Activated T-helper 1 cell treated with anti-CD3 and anti-CD28 coated beads, Interleukin-12 subunit alpha, Interleukin-12 subunit beta, Interleukin-2, Interleukin-4 antibody, amounts not matched to agents 30 ng/mL and 10 ng/mL and 1 ng/mL, durations not matched to agents 14 hours and 24 hours and 36 hours (primary cell): ENCODE measurements at regions of chr9 and their contacts with region 1.

Region 1: DNA sequence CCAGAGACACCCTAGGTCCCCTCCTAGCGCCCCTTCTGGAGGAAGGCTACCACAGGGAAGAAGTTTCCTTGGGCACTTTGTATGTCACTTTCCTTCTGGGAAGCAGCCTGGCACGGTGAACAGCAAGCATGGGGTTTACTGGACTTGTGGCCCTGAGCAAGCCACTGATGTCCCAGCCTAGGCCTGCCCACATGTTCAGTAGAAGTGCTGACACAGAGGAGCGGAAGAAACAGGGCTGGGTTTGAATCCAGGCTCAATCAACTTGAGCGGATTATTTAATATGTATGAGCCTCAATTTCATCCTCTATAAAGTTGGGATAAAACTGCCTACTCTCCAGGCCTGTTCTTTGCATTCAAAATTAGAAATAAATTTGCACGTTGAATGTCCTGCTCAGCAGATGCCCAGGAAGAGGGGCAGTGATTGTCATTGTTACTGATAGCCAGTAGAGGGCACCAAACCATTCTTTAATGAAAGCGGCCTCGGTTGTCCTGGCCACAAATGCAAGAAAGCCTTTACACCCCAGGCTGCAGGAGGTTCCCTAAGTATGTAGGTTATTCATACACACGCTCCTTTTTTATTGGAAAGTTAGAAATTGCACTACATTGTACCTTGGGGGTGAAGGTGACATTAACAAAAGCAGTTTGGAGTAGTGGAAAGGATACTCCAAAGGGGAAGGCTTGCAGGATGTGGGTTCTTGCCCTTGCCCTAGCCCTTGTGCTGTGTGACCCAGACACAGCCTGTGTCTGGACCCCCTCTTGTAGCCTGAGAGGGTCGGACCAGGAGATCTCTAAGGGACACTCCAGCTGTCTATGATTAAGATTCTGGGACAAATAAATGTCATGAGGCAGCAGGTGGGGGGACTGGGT is 13.4 kb upstream of the XPA start:
- DNase-seq: peak; percentile 31
- H3K4me3 Mint-ChIP-seq: no peak overlapping the region
- H3K27ac Mint-ChIP-seq: no peak overlapping the region
- H3K4me1 Mint-ChIP-seq: peaks cover 29% of the 10 kb centered on the region
- H3K27me3 Mint-ChIP-seq: peaks cover 15% of the 10 kb centered on the region

Region 2: GRCh38 chr9:97543565-97543964 is 167.0 kb before region 1 on chr9:
- intact Hi-C with region 1: no loop called
- DNase-seq: no peak
- H3K4me3 Mint-ChIP-seq: no peak overlapping the region
- H3K27ac Mint-ChIP-seq: no peak overlapping the region
- H3K4me1 Mint-ChIP-seq: no peaks in the 10 kb centered on the region
- H3K27me3 Mint-ChIP-seq: peaks cover 19% of the 10 kb centered on the region

Region 3: GRCh38 chr9:97853844-97854695 is 143.5 kb after region 1 on chr9:
- intact Hi-C with region 1: loop called (anchors 2 kb)
- DNase-seq: peak; percentile 48
- H3K4me3 Mint-ChIP-seq: peak overlapping the region; percentile 74
- H3K27ac Mint-ChIP-seq: peak overlapping the region; percentile 42
- H3K4me1 Mint-ChIP-seq: peaks cover 18% of the 10 kb centered on the region
- H3K27me3 Mint-ChIP-seq: peaks cover 80% of the 10 kb centered on the region

Region 4: DNA sequence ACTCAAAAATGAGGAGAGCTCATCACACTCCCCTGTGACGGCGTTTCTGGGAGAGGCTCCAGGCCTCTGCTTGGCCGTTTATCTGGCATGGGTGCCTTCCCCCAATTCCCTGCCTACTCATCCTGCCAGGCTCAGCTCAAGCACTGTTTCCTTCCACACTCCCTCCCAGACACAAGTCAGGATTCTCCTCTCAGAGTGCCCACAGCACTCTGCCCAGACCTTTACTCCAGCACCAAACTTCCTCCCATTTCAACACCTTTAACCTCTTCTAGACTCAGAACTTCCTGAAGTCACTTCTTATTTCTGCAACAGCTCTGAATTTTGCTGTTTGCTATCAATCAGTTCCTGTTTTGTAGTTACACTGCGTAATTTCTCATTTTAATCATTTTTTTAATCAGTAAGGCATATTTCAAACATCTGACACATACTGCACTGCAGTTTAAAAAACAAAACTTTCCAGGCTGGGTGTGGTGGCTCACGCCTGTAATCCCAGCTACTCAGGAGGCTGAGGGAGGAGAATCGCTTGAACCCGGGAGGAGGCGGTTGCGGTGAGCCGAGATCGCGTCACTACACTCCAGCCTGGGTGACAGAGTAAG is 195.7 kb after region 1 on chr9:
- intact Hi-C with region 1: loop called (anchors 1 kb)
- DNase-seq: no peak
- H3K4me3 Mint-ChIP-seq: peak overlapping the region; percentile 72
- H3K27ac Mint-ChIP-seq: peak overlapping the region; percentile 98
- H3K4me1 Mint-ChIP-seq: peaks cover 81% of the 10 kb centered on the region
- H3K27me3 Mint-ChIP-seq: no peaks in the 10 kb centered on the region

Region 5: DNA sequence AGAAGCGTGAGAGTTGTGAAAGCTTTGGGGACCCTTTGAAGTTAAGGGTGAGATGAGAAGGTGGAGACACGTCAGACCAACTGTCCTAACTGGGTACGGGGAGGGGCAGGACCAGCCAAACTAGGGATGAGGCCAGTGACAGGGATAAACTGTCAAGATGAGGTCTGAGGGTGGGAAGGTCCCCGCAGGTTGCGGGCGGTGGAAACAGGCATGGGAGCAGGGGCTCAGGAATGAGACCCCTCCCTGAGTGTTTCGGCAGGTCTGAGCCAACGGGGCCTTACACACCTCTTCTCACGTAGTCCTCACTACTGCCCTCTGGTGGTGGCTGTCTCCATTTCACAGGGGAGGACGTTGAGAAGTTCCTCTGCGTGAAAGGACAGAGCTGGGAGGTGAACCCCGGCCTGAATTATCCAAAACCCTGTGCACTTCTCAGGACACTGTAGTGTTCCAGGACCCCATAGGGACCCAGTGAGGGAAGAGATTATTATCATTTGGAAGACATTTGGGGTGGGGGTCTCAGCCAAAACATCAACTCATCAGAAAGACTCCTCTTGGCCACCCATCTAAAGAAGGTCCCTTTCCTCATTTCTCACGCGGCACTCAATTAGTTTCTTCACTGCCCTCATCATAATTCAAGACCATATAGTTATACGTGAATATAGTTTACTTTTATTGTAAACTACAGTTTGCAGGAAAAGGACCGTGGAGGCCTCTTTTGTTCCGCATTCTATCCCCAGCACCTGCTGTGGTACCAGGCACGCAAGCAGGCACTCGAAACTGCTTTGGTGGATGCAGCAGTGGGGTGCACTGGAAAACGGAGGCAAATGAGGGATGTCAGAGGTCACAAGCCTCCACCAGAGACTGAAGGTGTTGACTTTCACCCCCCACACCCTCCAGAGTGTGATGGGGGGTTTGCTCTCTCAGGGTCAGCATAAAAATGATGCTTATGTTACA is 324.3 kb after region 1 on chr9:
- intact Hi-C with region 1: loop called (anchors 1 kb)
- DNase-seq: peak; percentile 80
- H3K4me3 Mint-ChIP-seq: no peak overlapping the region
- H3K27ac Mint-ChIP-seq: peak overlapping the region; percentile 50
- H3K4me1 Mint-ChIP-seq: peaks cover 10% of the 10 kb centered on the region
- H3K27me3 Mint-ChIP-seq: peaks cover 2% of the 10 kb centered on the region